Prostate gland (tissue), 2 donors: ENCODE measurements at regions of chr3 and their contacts with region 1.

Region 1: GRCh38 chr3:48609088-48610005 is at the start of gene UQCRC1:
- DNase-seq: peak; percentile 89
- H3K4me3 ChIP-seq: peak within 1 kb of the TSS; percentile 88 to 91
- H3K27ac ChIP-seq: peak within 1 kb of the TSS; percentile 84 to 88
- H3K4me1 ChIP-seq: no peaks in the 10 kb centered on the region
- H3K27me3 ChIP-seq: no peaks in the 10 kb centered on the region
- CTCF ChIP-seq: peak; percentile 47 to 96 (median 88)
- POLR2A ChIP-seq: peak; percentile 90
- total RNA-seq, gene UQCRC1: 239 to 251 TPM

Region 2: GRCh38 chr3:48459773-48460516 is 149.4 kb before region 1 on chr3:
- intact Hi-C with region 1: loop called (anchors 10 kb)
- DNase-seq: no peak
- H3K4me3 ChIP-seq: no peak overlapping the region
- H3K27ac ChIP-seq: no peak overlapping the region
- H3K4me1 ChIP-seq: peaks cover 4% of the 10 kb centered on the region
- H3K27me3 ChIP-seq: no peaks in the 10 kb centered on the region
- CTCF ChIP-seq: no peak
- POLR2A ChIP-seq: no peak

Region 3: DNA sequence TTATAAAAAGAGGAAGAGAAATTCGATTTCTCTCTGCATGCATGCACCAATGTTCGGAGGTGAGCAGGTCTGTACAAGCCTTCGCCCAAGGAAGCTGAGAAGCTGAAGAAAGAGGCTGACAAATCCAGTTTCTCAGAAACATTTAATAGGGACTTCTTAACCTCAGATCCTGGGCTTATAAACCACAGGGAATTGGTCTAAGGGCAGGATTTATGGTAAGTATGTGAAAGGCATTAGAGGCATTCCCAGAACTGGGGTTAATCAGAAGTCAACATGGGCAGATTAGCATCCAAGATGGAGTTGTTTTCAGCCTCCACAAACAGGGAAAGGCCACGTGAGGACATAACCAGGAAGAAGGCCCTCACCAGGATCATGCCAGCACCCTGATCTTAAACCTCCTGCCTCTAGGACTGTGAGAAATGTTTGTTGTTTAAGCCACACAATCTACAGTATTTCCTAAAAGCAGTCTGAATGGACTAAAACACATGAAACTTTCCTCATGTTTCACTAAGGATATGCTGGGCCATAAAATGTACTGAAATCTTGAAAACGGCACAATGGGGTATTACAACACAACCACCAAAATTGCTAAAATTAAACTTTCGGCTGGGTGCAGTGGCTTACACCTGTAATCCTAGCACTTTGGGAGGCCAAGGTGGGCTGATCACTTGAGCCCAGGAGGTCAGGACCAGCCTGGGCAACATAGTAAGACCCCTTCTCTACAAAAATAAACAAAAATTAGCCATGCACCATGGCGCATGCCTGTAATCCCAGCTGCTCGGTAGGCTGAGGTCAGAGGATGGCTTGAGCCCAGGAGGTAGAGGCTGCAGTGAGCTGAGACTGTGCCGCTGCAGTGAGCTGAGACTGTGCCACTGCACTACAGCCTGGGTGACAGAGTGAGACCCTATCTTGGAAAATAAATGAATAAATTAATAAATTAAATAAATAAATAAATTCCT is 116.5 kb before region 1 on chr3:
- intact Hi-C with region 1: no loop called
- DNase-seq: peak; percentile 88
- H3K4me3 ChIP-seq: no peak overlapping the region
- H3K27ac ChIP-seq: peak overlapping the region; percentile 55 to 70
- H3K4me1 ChIP-seq: no peaks in the 10 kb centered on the region
- H3K27me3 ChIP-seq: no peaks in the 10 kb centered on the region
- CTCF ChIP-seq: no peak
- POLR2A ChIP-seq: no peak